Activated CD4-positive, alpha-beta memory T cell treated with anti-CD3 and anti-CD28 coated beads for 36 hours (primary cell): ENCODE measurements at regions of chr7 and their contacts with region 1.

Region 1: GRCh38 chr7:66033471-66034385 is 41.9 kb upstream of the ASL start:
- DNase-seq: no peak
- H3K4me3 Mint-ChIP-seq: no peak overlapping the region
- H3K27ac Mint-ChIP-seq: no peak overlapping the region
- H3K4me1 Mint-ChIP-seq: no peaks in the 10 kb centered on the region
- H3K27me3 Mint-ChIP-seq: no peaks in the 10 kb centered on the region

Region 2: GRCh38 chr7:65820287-65820950 is 213.3 kb before region 1 on chr7:
- CTCF ChIA-PET with region 1: no interaction called
- POLR2A ChIA-PET with region 1: no interaction called
- intact Hi-C with region 1: no loop called
- DNase-seq: no peak
- H3K4me3 Mint-ChIP-seq: no peak overlapping the region
- H3K27ac Mint-ChIP-seq: no peak overlapping the region
- H3K4me1 Mint-ChIP-seq: no peaks in the 10 kb centered on the region
- H3K27me3 Mint-ChIP-seq: no peaks in the 10 kb centered on the region

Region 3: GRCh38 chr7:66114793-66115649 is 81.3 kb after region 1 on chr7 and contains the start of gene CRCP:
- CTCF ChIA-PET with region 1: no interaction called
- POLR2A ChIA-PET with region 1: no interaction called
- intact Hi-C with region 1: no loop called
- DNase-seq: peak; percentile 88
- H3K4me3 Mint-ChIP-seq: peak within 1 kb of the TSS; percentile 97
- H3K27ac Mint-ChIP-seq: peak within 1 kb of the TSS; percentile 96
- H3K4me1 Mint-ChIP-seq: peaks cover 44% of the 10 kb centered on the region
- H3K27me3 Mint-ChIP-seq: no peaks in the 10 kb centered on the region
- total RNA-seq, gene CRCP: 19.3 to 19.6 TPM

Region 4: DNA sequence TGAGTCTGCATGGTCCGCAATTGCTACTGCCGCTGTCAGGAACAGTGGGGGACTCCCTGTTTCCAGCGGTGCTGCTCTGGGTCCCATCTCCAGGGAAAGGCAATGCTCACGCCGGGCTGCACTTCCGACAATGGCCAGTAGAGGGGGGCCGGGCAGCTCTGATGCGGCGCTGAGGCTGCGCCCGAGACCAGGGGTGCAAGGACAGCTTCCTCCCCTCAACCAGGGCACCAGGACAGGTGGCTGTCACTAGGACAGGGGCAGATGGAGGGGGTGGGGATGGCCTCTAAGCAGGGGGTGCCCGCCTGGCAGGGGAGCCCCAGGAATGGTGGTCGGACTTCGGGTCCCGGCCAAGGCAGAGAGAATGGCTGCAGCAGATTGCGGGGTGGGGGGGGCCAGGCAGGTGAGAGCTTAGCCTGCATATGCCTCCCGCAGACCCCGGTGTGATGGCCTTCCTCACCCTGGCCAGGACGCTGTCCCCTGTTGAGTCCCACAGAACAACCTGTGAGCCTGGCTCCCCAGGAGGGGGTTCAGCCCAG is 523.9 kb after region 1 on chr7:
- CTCF ChIA-PET with region 1: no interaction called
- POLR2A ChIA-PET with region 1: no interaction called
- intact Hi-C with region 1: loop called (anchors 5 kb)
- DNase-seq: peak; percentile 78
- H3K4me3 Mint-ChIP-seq: no peak overlapping the region
- H3K27ac Mint-ChIP-seq: no peak overlapping the region
- H3K4me1 Mint-ChIP-seq: no peaks in the 10 kb centered on the region
- H3K27me3 Mint-ChIP-seq: no peaks in the 10 kb centered on the region